HEK293 (cell line): ENCODE measurements at regions of chr5 and their contacts with region 1.

Region 1: DNA sequence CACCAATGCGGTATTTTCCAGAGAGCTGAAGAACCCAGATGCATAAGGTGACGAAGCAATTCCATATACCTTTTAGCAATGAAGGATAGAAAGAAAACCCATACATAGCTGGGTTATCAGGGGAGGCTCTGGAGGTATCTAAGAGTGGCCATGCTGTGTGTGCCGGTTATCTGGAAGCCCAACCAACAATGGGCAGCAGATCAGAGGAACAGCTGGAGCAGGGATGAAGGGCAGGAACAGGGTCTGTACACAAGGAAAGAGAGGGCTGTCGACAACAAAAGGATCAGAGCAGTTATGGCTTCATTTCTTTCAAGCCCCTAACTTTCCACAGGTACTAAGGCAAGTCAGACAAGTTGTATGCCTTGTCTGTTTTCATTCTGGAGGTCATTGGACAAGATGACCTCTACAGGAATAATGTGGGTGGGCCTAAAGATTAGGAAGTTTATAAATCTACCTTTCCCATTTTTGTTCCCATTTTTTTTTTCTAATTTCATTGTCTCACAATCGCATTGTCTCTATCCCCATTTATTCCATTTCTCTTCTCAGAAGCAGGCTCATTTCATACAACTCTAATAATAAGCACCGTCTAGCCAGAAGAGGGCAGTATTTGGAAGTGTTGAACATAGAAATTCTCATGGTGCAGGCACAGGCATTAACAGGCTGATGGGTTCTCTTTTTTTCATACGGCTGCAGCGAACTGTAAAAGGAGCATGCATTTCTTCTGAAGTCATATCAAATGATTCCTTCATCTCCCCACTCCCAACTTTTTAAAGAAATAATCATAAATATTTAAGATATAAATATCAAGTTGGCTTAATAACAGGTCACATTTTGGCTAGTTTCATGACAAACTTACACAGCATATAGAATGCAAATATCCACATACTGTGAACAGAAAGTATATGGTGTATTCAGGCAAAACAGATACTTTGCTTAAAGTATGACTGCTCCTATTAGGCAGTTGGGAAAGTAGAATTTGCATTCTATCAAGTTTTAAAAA is 63.5 kb downstream of the ZNF474 start:
- H3K4me3 ChIP-seq: no peak overlapping the region
- H3K27ac ChIP-seq: no peak overlapping the region
- H3K4me1 ChIP-seq: no peaks in the 10 kb centered on the region; the same call in 1 of the 2 replicates
- CTCF ChIP-seq: peak; percentile 45; the same call in 1 of the 2 replicates

Region 2: GRCh38 chr5:122182491-122182921 is 10.3 kb before region 1 on chr5:
- CTCF ChIA-PET with region 1: interaction called, 13 read pairs
- POLR2A ChIA-PET with region 1: no interaction called
- H3K4me3 ChIP-seq: no peak overlapping the region
- H3K27ac ChIP-seq: no peak overlapping the region; the same call in 1 of the 2 replicates
- H3K4me1 ChIP-seq: peaks cover 11% of the 10 kb centered on the region
- CTCF ChIP-seq: no peak

Region 3: DNA sequence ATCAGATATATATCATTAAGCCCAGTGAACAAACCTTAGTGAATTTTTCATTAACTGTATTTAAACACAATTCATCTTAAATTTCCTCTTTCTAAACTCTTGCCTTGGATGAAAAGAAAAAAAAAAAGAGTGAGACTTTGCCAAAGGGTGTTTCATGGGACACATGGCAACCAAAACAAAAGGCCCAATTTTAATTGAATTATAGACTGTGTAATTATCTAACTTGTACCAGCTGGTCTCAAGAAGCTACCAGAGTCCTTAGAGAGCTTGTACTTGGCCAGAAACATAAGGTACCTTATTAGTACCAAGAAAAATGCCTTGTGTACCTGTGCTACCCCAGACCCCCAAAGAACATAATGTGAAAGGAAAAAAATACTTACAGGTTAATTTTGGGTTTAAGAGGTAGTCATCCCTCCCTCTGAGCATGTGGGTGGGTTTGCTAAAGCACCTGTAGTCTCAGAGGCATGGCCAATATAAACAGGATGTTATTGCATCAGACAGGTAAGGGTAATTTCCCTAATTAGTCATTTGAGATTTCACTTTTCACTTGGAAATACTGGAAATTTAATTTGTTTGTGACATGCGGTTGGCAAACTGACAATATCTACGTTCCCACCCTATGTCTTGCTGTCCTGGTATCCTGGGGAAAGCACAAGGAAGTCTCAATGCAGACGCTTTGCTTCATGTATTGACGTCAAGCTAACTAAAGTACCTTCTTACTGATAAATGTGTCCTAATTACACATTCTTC is 209.4 kb after region 1 on chr5:
- CTCF ChIA-PET with region 1: interaction called, 14 read pairs
- POLR2A ChIA-PET with region 1: no interaction called
- H3K4me3 ChIP-seq: no peak overlapping the region
- H3K27ac ChIP-seq: no peak overlapping the region
- H3K4me1 ChIP-seq: no peaks in the 10 kb centered on the region
- CTCF ChIP-seq: no peak

Region 4: GRCh38 chr5:122415030-122415800 is 222.4 kb after region 1 on chr5:
- CTCF ChIA-PET with region 1: interaction called, 80 read pairs
- POLR2A ChIA-PET with region 1: no interaction called
- H3K4me3 ChIP-seq: no peak overlapping the region
- H3K27ac ChIP-seq: no peak overlapping the region
- H3K4me1 ChIP-seq: peaks cover 3% of the 10 kb centered on the region; the same call in 1 of the 2 replicates
- CTCF ChIP-seq: peak; percentile 69

Region 5: DNA sequence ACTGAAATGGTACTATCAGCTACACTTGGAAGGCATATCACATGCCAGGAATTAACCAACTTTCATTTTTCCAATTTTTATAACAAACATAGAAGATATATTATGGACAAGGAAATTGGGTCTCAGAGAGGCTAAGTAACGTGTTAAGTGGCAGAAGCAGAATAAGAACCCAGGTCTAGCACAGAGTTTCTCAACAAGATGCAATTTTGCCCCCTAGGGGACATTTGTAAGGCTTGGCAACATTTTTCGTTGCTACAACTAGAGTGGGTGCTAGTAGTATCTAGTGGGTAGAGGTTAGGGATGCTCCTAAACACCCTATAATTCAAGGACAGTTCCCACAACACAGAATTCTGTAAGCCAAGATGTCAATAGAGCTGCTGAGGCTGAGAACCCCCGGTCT is 299.9 kb after region 1 on chr5:
- CTCF ChIA-PET with region 1: interaction called, 20 read pairs
- POLR2A ChIA-PET with region 1: no interaction called
- H3K4me3 ChIP-seq: no peak overlapping the region
- H3K27ac ChIP-seq: peak overlapping the region; percentile 38; the same call in 1 of the 2 replicates
- H3K4me1 ChIP-seq: peaks cover 11% of the 10 kb centered on the region; the same call in 1 of the 2 replicates
- CTCF ChIP-seq: peak; percentile 53

Region 6: DNA sequence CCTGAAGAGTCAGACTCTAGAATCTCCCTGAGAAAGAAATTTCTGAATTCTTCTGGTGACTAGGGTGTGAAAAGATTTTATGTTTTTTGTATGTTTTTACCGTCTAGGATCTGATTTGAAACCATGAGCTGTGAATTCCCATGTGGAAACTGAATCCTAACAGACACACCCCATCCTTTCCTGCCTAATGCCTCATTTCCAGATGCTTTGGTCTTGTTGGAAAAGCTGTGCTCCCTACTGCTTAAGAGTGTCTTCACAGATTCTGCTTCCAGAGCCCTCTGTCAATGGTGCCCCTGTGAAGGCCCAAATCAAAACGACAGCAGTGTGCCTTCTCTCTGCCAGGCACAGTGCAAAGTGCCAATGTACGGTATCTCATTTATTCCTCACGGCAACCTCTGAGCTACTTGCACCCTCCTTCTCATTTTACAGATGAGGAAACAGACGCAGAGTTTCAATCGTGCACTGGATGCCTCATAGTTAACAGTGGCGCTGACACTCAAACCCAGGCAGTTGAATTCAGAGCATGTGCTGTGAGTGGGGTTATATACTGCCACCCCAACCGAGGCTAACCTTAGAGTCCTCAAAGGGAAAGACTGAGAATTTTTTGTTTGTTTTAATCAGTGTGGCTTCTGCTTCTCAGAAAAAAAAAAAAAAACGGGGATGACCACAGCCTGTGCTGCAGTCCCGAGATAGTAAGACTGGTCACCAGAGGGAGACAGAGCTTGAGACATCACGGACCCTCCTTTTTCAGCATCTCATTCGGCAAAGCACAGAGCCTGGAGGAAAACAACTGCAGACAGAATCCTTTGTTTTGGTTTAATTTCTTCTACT is 307.7 kb after region 1 on chr5:
- CTCF ChIA-PET with region 1: interaction called, 13 read pairs
- POLR2A ChIA-PET with region 1: no interaction called
- H3K4me3 ChIP-seq: no peak overlapping the region
- H3K27ac ChIP-seq: no peak overlapping the region
- H3K4me1 ChIP-seq: no peaks in the 10 kb centered on the region
- CTCF ChIP-seq: peak; percentile 66